PC-9 (cell line): ENCODE measurements at regions of chr1 and their contacts with region 1.

Region 1: DNA sequence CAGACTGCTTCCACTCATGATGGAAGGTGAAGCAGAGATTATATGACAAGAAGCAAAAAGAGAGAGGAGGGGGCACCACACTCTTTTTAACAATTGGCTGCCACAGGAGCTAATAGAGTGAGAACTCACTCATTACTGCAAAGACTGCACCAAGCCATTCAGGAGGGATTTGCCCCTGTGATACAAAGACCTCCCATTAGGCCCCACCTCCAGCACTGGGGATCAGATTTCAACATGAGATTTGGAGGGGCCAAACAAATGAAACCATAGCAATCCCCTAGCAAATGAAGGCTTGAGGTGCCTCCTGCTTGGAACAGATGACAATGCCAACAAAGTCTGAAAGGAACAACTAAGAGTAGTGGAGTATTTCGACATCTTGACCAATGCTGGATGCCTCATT is 122.5 kb upstream of the COA6 start:
- DNase-seq: no peak
- H3K4me3 ChIP-seq: no peak overlapping the region
- H3K27ac ChIP-seq: no peak overlapping the region
- H3K4me1 ChIP-seq: no peaks in the 10 kb centered on the region
- H3K27me3 ChIP-seq: no peaks in the 10 kb centered on the region
- CTCF ChIP-seq: no peak

Region 2: GRCh38 chr1:234368320-234369032 is 117.7 kb after region 1 on chr1:
- CTCF ChIA-PET with region 1: no interaction called
- POLR2A ChIA-PET with region 1: no interaction called
- intact Hi-C with region 1: no loop called
- DNase-seq: no peak
- H3K4me3 ChIP-seq: 0 out of 2 replicates have a peak overlapping the region, but pooled peaks have one; percentile 10
- H3K27ac ChIP-seq: peak overlapping the region; percentile 99
- H3K4me1 ChIP-seq: peaks cover 38% of the 10 kb centered on the region
- H3K27me3 ChIP-seq: no peaks in the 10 kb centered on the region
- CTCF ChIP-seq: no peak

Region 3: GRCh38 chr1:236239092-236239585 is 1988.4 kb after region 1 on chr1:
- CTCF ChIA-PET with region 1: no interaction called
- POLR2A ChIA-PET with region 1: interaction called, 13 read pairs
- intact Hi-C with region 1: no loop called
- DNase-seq: no peak
- H3K4me3 ChIP-seq: no peak overlapping the region
- H3K27ac ChIP-seq: no peak overlapping the region
- H3K4me1 ChIP-seq: no peaks in the 10 kb centered on the region
- H3K27me3 ChIP-seq: no peaks in the 10 kb centered on the region
- CTCF ChIP-seq: no peak